Prostate gland (tissue), 2 donors: ENCODE measurements at regions of chr13 and their contacts with region 1.

Region 1: GRCh38 chr13:26253787-26254582 is at the start of gene CDK8:
- DNase-seq: peak; percentile 92
- H3K4me3 ChIP-seq: peak within 1 kb of the TSS; percentile 86 to 92
- H3K27ac ChIP-seq: peak within 1 kb of the TSS; percentile 93
- H3K4me1 ChIP-seq: peaks cover 4% of the 10 kb centered on the region
- H3K27me3 ChIP-seq: no peaks in the 10 kb centered on the region
- CTCF ChIP-seq: peak in 2 of 4 experiments; percentile 15 to 30
- POLR2A ChIP-seq: peak; percentile 70
- total RNA-seq, gene CDK8: 9.9 to 11.6 TPM

Region 2: GRCh38 chr13:26186118-26186870 is 67.7 kb before region 1 on chr13:
- intact Hi-C with region 1: loop called (anchors 5 kb)
- DNase-seq: peak; percentile 87
- H3K4me3 ChIP-seq: peak overlapping the region; percentile 42 to 53
- H3K27ac ChIP-seq: peak overlapping the region; percentile 48 to 67
- H3K4me1 ChIP-seq: no peaks in the 10 kb centered on the region
- H3K27me3 ChIP-seq: no peaks in the 10 kb centered on the region
- CTCF ChIP-seq: peak in 3 of 4 experiments; percentile 27 to 72 (median 68)
- POLR2A ChIP-seq: peak; percentile 29

Region 3: DNA sequence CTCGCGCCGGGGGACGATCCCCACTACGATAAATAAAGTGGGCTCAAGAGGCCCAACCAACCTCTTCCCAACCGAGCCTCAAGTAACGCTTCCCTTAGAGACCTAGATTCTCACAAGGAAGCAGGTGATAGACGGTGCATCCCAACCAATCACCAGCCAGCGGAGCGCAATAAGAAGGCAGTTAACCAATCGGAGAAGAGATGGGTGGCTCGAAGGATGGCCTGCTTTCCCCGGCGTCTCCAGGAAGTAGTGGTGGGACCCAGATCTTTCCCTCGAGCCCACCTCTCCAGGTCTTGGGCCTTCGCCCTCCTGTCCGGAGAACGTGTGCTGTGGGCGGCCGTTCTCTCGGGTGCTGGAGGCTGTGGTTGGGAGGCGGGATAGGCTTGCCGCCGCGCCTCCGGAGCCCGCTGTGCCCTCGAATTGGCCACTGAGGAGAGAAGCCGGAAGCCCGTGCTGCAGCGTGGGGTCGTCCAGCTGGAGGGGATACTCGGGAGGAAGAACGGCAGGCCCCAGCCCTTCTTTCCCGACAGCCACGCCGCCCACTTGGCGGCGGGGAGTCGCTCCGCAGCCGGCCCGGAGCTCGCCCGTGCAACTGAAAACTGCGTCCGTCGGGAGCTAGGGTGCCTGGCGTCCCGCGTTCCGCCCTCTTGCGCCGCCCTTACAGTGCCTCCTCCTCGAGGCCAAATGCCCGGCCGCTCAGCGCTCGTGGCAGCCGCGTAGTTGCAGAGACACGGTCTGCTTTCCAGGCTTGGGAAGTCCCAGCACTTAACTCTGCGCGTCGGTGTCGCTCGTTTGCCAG is 32.1 kb before region 1 on chr13 and contains the start of gene RNF6:
- intact Hi-C with region 1: loop called (anchors 2 kb)
- DNase-seq: peak; percentile 98
- H3K4me3 ChIP-seq: peak within 1 kb of the TSS; percentile 99
- H3K27ac ChIP-seq: peak within 1 kb of the TSS; percentile 92 to 93
- H3K4me1 ChIP-seq: peaks cover 5% of the 10 kb centered on the region
- H3K27me3 ChIP-seq: no peaks in the 10 kb centered on the region
- CTCF ChIP-seq: peak in 2 of 4 experiments; percentile 12 to 29
- POLR2A ChIP-seq: peak; percentile 61
- total RNA-seq, gene RNF6: 22.4 to 28.2 TPM

Region 4: DNA sequence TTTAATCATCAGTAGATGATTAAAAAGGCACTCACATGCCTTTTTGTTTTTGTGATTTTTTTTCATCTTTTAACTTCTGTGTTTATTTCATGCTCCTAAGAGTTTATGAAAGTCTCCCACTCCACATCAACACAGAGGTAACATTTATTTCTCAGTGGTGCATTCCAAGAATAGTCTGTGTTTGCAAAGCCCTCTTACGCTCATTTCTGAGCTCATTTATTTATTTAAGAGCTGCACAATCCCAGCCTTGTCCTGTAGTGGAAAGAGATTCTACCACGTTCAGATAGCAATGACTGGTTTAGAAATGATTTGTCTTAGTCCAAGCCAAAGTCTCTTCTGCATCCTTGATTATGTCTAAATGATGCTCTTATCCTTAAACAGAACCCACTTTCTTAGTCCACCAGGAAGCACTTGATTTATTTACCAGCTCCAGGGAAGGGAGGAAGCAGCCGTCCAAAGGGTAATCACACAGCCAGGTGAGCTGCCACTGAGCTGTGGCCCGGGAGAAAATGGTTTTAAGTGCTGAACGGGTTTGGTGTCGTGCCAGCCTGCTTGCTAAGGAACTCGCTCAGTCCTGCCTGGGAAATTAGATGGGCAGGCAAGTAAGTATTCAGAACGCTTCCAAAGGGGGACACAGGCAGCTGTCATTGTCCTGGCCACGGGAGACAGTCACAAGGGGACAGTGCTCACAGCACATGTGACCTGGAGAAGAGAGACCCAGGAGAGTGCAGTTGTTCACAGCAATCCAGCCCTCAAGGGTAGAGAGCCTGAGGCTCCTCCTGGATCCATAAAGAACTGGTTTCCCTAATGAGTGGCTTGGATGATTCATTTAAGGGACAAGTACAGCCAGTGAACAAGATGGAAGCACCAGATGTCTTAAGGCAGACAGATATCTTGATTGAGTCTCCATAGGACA is 171.7 kb after region 1 on chr13:
- intact Hi-C with region 1: loop called (anchors 10 kb)
- DNase-seq: no peak
- H3K4me3 ChIP-seq: no peak overlapping the region
- H3K27ac ChIP-seq: peak overlapping the region; percentile 36 to 41
- H3K4me1 ChIP-seq: no peaks in the 10 kb centered on the region
- H3K27me3 ChIP-seq: no peaks in the 10 kb centered on the region
- CTCF ChIP-seq: no peak
- POLR2A ChIP-seq: no peak

Region 5: GRCh38 chr13:26498656-26499591 is 244.9 kb after region 1 on chr13:
- intact Hi-C with region 1: loop called (anchors 5 kb)
- DNase-seq: peak; percentile 8
- H3K4me3 ChIP-seq: no peak overlapping the region
- H3K27ac ChIP-seq: no peak overlapping the region
- H3K4me1 ChIP-seq: no peaks in the 10 kb centered on the region
- H3K27me3 ChIP-seq: no peaks in the 10 kb centered on the region
- CTCF ChIP-seq: peak in 2 of 4 experiments; percentile 11 to 19
- POLR2A ChIP-seq: no peak

Region 6: GRCh38 chr13:26509491-26509890 is 255.5 kb after region 1 on chr13:
- intact Hi-C with region 1: no loop called
- DNase-seq: no peak
- H3K4me3 ChIP-seq: no peak overlapping the region
- H3K27ac ChIP-seq: no peak overlapping the region
- H3K4me1 ChIP-seq: no peaks in the 10 kb centered on the region
- H3K27me3 ChIP-seq: no peaks in the 10 kb centered on the region
- CTCF ChIP-seq: no peak
- POLR2A ChIP-seq: no peak